ENCODE measurements at regions of chr6 and their contacts with region 1.

Region 1: GRCh38 chr6:26216356-26216885 is 129.2 kb downstream of the HFE start:
- DNase-seq: peak; percentile 98
- H3K4me3 Mint-ChIP-seq: no peak overlapping the region
- H3K27ac Mint-ChIP-seq: no peak overlapping the region
- H3K4me1 Mint-ChIP-seq: no peaks in the 10 kb centered on the region
- H3K27me3 Mint-ChIP-seq: no peaks in the 10 kb centered on the region
- CTCF ChIP-seq: no peak

Region 2: GRCh38 chr6:25927756-25928216 is 288.6 kb before region 1 on chr6:
- CTCF ChIA-PET with region 1: no interaction called
- POLR2A ChIA-PET with region 1: no interaction called
- intact Hi-C with region 1: no loop called
- DNase-seq: no peak
- H3K4me3 Mint-ChIP-seq: no peak overlapping the region
- H3K27ac Mint-ChIP-seq: no peak overlapping the region
- H3K4me1 Mint-ChIP-seq: no peaks in the 10 kb centered on the region
- H3K27me3 Mint-ChIP-seq: no peaks in the 10 kb centered on the region
- CTCF ChIP-seq: no peak

Region 3: GRCh38 chr6:26054857-26055669 is 161.4 kb before region 1 on chr6:
- CTCF ChIA-PET with region 1: interaction called, 3 read pairs
- POLR2A ChIA-PET with region 1: interaction called, 22 read pairs
- intact Hi-C with region 1: no loop called
- DNase-seq: peak; percentile 96
- H3K4me3 Mint-ChIP-seq: peak overlapping the region; percentile 74
- H3K27ac Mint-ChIP-seq: peak overlapping the region; percentile 92
- H3K4me1 Mint-ChIP-seq: no peaks in the 10 kb centered on the region
- H3K27me3 Mint-ChIP-seq: no peaks in the 10 kb centered on the region
- CTCF ChIP-seq: no peak

Region 4: GRCh38 chr6:26196846-26197648 is 19.4 kb before region 1 on chr6:
- CTCF ChIA-PET with region 1: interaction called, 20 read pairs
- POLR2A ChIA-PET with region 1: interaction called, 443 read pairs
- intact Hi-C with region 1: loop called (anchors 1 kb)
- DNase-seq: peak; percentile 94
- H3K4me3 Mint-ChIP-seq: peak overlapping the region; percentile 93
- H3K27ac Mint-ChIP-seq: peak overlapping the region; percentile 96
- H3K4me1 Mint-ChIP-seq: peaks cover 28% of the 10 kb centered on the region
- H3K27me3 Mint-ChIP-seq: no peaks in the 10 kb centered on the region
- CTCF ChIP-seq: no peak

Region 5: GRCh38 chr6:26270903-26271667 is 54.7 kb after region 1 on chr6:
- CTCF ChIA-PET with region 1: interaction called, 10 read pairs
- POLR2A ChIA-PET with region 1: interaction called, 405 read pairs
- intact Hi-C with region 1: loop called (anchors 1 kb)
- DNase-seq: peak; percentile 97
- H3K4me3 Mint-ChIP-seq: no peak overlapping the region
- H3K27ac Mint-ChIP-seq: peak overlapping the region; percentile 54
- H3K4me1 Mint-ChIP-seq: peaks cover 6% of the 10 kb centered on the region
- H3K27me3 Mint-ChIP-seq: no peaks in the 10 kb centered on the region
- CTCF ChIP-seq: no peak

Region 6: GRCh38 chr6:26524722-26525370 is 308.4 kb after region 1 on chr6:
- CTCF ChIA-PET with region 1: no interaction called
- POLR2A ChIA-PET with region 1: no interaction called
- intact Hi-C with region 1: no loop called
- DNase-seq: no peak
- H3K4me3 Mint-ChIP-seq: no peak overlapping the region
- H3K27ac Mint-ChIP-seq: no peak overlapping the region
- H3K4me1 Mint-ChIP-seq: peaks cover 9% of the 10 kb centered on the region
- H3K27me3 Mint-ChIP-seq: no peaks in the 10 kb centered on the region
- CTCF ChIP-seq: no peak

Region 7: GRCh38 chr6:26596579-26597388 is 380.4 kb after region 1 on chr6 and contains the start of gene ABT1:
- CTCF ChIA-PET with region 1: no interaction called
- POLR2A ChIA-PET with region 1: interaction called, 6 read pairs
- intact Hi-C with region 1: loop called (anchors 5 kb)
- DNase-seq: peak; percentile 99
- H3K4me3 Mint-ChIP-seq: no peak within 1 kb of the TSS
- H3K27ac Mint-ChIP-seq: no peak within 1 kb of the TSS
- H3K4me1 Mint-ChIP-seq: peaks cover 6% of the 10 kb centered on the region
- H3K27me3 Mint-ChIP-seq: no peaks in the 10 kb centered on the region
- CTCF ChIP-seq: no peak
- total RNA-seq, gene ABT1: 11.9 and 12.9 TPM in 2 replicates

Region 8: GRCh38 chr6:27838058-27838944 is 1621.9 kb after region 1 on chr6:
- CTCF ChIA-PET with region 1: no interaction called
- POLR2A ChIA-PET with region 1: interaction called, 54 read pairs
- intact Hi-C with region 1: no loop called
- DNase-seq: peak; percentile 98
- H3K4me3 Mint-ChIP-seq: no peak overlapping the region
- H3K27ac Mint-ChIP-seq: no peak overlapping the region
- H3K4me1 Mint-ChIP-seq: peaks cover 32% of the 10 kb centered on the region
- H3K27me3 Mint-ChIP-seq: no peaks in the 10 kb centered on the region
- CTCF ChIP-seq: no peak